Activated CD4-positive, alpha-beta T cell treated with anti-CD3 and anti-CD28 coated beads for 36 hours (primary cell): ENCODE measurements at regions of chr1 and their contacts with region 1.

Region 1: DNA sequence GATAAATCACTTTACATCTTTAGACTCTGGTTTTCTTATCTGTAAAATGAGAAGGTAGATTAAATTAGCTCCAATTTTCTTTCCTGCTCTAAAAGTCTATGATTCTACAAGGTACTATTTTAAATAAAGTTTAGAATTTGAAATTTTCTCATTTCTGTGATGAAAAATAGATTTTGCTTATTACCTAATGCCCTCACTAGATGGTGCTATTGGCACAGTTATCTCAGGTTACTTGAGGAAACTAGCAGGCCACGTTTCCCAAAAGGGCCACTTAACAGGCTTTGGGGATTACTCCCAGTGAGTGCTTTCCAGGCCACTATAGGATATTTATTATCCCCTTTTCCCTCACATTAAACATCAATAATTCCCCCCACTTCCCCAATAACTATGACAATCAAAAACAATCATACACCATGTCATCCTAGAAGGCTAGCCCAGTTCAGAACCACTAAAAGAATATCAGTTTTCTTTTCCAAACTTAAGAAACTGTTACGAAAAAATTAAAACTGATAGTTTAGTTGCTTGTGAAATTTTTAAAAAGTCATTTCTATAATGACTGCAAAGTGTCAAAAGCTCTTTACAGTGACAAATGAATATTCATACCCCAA is 30.6 kb downstream of the OMA1 start:
- DNase-seq: peak; percentile 29
- ATAC-seq: peak; percentile 65
- H3K4me3 Mint-ChIP-seq: no peak overlapping the region
- H3K27ac Mint-ChIP-seq: peak overlapping the region; percentile 66
- H3K4me1 Mint-ChIP-seq: peaks cover 10% of the 10 kb centered on the region
- H3K27me3 Mint-ChIP-seq: no peaks in the 10 kb centered on the region

Region 2: GRCh38 chr1:58500043-58500442 is 15.9 kb before region 1 on chr1:
- CTCF ChIA-PET with region 1: interaction called, 18 read pairs
- POLR2A ChIA-PET with region 1: no interaction called
- intact Hi-C with region 1: no loop called
- DNase-seq: no peak
- ATAC-seq: no peak
- H3K4me3 Mint-ChIP-seq: no peak overlapping the region
- H3K27ac Mint-ChIP-seq: no peak overlapping the region
- H3K4me1 Mint-ChIP-seq: peaks cover 9% of the 10 kb centered on the region
- H3K27me3 Mint-ChIP-seq: no peaks in the 10 kb centered on the region

Region 3: GRCh38 chr1:58546520-58547308 is 30.8 kb after region 1 on chr1 and contains the start of gene OMA1:
- CTCF ChIA-PET with region 1: interaction called, 95 read pairs
- POLR2A ChIA-PET with region 1: no interaction called
- intact Hi-C with region 1: loop called (anchors 1 kb)
- DNase-seq: peak; percentile 97
- ATAC-seq: peak; percentile 93
- H3K4me3 Mint-ChIP-seq: peak within 1 kb of the TSS; percentile 86
- H3K27ac Mint-ChIP-seq: peak within 1 kb of the TSS; percentile 96
- H3K4me1 Mint-ChIP-seq: peaks cover 18% of the 10 kb centered on the region
- H3K27me3 Mint-ChIP-seq: peaks cover 1% of the 10 kb centered on the region
- total RNA-seq, gene OMA1: 8.8 to 11.6 TPM

Region 4: DNA sequence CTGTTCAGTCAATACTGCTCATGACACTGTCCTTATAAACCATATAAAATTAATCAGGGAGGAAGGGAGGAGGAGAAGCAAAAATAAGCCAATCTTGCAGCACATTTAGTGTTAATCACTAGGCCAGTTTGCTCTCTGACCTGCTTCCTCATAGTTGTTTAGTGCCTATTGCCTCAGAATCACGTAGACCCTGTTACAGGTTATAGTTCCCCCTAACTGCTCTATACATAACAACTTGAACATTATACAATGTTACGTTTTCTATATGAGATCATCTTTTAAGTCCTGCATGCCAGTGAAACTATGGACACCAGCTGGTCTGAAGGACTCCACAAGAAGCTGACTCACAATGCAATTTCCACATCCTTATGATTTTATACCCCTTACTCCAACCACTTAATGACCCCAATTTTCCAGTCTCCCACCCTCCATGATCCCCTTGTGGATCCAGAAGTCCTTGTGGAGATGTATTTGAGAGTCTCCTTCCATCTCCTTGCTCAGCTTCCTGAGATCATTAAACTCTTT is 96.0 kb after region 1 on chr1:
- CTCF ChIA-PET with region 1: no interaction called
- POLR2A ChIA-PET with region 1: no interaction called
- intact Hi-C with region 1: no loop called
- DNase-seq: no peak
- ATAC-seq: no peak
- H3K4me3 Mint-ChIP-seq: no peak overlapping the region
- H3K27ac Mint-ChIP-seq: no peak overlapping the region
- H3K4me1 Mint-ChIP-seq: no peaks in the 10 kb centered on the region
- H3K27me3 Mint-ChIP-seq: peaks cover 26% of the 10 kb centered on the region

Region 5: DNA sequence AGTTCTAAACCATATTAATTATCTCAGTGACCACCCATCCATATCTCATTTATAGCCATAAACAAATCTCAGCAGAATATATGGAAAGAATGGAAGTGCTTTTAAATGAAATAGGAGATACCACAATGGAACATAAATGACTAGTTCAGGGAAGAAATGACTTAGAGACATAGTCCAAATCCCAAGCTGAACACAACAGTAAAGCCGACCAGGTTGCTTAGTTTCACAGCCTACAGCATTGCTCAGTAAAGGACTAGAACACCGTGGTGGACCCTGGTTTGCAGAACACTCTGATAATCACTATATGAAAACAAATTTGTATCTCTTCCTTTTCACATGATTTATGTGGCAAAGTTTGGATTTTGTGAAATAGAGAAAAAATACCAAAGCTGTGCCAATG is 143.6 kb after region 1 on chr1:
- CTCF ChIA-PET with region 1: interaction called, 97 read pairs
- POLR2A ChIA-PET with region 1: no interaction called
- intact Hi-C with region 1: no loop called
- DNase-seq: no peak
- ATAC-seq: no peak
- H3K4me3 Mint-ChIP-seq: no peak overlapping the region
- H3K27ac Mint-ChIP-seq: no peak overlapping the region
- H3K4me1 Mint-ChIP-seq: no peaks in the 10 kb centered on the region
- H3K27me3 Mint-ChIP-seq: no peaks in the 10 kb centered on the region

Region 6: DNA sequence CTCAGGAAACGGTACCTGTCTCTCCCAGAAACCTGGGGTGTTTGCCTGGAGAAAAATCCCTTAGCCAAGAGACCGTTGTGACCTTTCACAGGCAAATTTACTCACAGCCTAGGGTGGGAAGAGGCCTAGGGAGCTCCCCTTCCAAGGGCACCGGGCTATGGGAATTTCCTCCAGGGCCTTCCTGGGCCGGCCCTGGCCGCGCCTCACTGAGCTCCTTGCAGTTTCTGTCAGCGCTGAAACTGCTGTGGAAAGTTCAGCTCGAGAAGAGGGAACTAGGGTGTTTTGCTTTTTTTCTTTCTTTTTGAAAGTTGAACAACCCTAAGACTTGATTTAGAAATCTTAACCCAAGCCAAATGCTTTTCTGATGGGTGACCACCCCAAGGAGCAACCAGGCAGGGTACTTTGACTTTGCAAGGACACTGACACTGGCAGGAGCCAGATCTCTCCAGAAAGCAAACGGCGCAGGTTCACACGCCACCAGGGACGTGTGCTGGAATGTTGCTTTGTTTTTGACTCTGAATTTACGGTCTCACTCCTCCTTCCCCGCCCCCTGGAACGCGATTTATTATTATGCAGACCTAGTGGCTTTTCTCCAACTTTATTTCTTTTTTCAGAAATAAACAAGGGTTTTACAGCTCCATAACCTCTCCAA is 497.5 kb after region 1 on chr1:
- CTCF ChIA-PET with region 1: no interaction called
- POLR2A ChIA-PET with region 1: no interaction called
- intact Hi-C with region 1: no loop called
- DNase-seq: no peak
- ATAC-seq: no peak
- H3K4me3 Mint-ChIP-seq: no peak overlapping the region
- H3K27ac Mint-ChIP-seq: no peak overlapping the region
- H3K4me1 Mint-ChIP-seq: peaks cover 5% of the 10 kb centered on the region
- H3K27me3 Mint-ChIP-seq: peaks cover 3% of the 10 kb centered on the region

Region 7: GRCh38 chr1:59699227-59699847 is 1183.4 kb after region 1 on chr1:
- CTCF ChIA-PET with region 1: interaction called, 6 read pairs
- POLR2A ChIA-PET with region 1: no interaction called
- intact Hi-C with region 1: loop called (anchors 5 to 10 kb)
- DNase-seq: peak; percentile 12
- ATAC-seq: peak; percentile 33
- H3K4me3 Mint-ChIP-seq: no peak overlapping the region
- H3K27ac Mint-ChIP-seq: no peak overlapping the region
- H3K4me1 Mint-ChIP-seq: peaks cover 21% of the 10 kb centered on the region
- H3K27me3 Mint-ChIP-seq: no peaks in the 10 kb centered on the region